ENCODE measurements at regions of chr20 and their contacts with region 1.

Region 1: GRCh38 chr20:57398231-57398821 is 7.1 kb downstream of the RBM38 start:
- DNase-seq: peak; percentile 78
- H3K4me3 Mint-ChIP-seq: peak overlapping the region; percentile 75
- H3K27ac Mint-ChIP-seq: peak overlapping the region; percentile 91
- H3K4me1 Mint-ChIP-seq: peaks cover 60% of the 10 kb centered on the region
- H3K27me3 Mint-ChIP-seq: no peaks in the 10 kb centered on the region

Region 2: GRCh38 chr20:57323034-57323433 is 75.3 kb before region 1 on chr20:
- intact Hi-C with region 1: no loop called
- DNase-seq: no peak
- H3K4me3 Mint-ChIP-seq: no peak overlapping the region
- H3K27ac Mint-ChIP-seq: no peak overlapping the region
- H3K4me1 Mint-ChIP-seq: no peaks in the 10 kb centered on the region
- H3K27me3 Mint-ChIP-seq: peaks cover 49% of the 10 kb centered on the region

Region 3: DNA sequence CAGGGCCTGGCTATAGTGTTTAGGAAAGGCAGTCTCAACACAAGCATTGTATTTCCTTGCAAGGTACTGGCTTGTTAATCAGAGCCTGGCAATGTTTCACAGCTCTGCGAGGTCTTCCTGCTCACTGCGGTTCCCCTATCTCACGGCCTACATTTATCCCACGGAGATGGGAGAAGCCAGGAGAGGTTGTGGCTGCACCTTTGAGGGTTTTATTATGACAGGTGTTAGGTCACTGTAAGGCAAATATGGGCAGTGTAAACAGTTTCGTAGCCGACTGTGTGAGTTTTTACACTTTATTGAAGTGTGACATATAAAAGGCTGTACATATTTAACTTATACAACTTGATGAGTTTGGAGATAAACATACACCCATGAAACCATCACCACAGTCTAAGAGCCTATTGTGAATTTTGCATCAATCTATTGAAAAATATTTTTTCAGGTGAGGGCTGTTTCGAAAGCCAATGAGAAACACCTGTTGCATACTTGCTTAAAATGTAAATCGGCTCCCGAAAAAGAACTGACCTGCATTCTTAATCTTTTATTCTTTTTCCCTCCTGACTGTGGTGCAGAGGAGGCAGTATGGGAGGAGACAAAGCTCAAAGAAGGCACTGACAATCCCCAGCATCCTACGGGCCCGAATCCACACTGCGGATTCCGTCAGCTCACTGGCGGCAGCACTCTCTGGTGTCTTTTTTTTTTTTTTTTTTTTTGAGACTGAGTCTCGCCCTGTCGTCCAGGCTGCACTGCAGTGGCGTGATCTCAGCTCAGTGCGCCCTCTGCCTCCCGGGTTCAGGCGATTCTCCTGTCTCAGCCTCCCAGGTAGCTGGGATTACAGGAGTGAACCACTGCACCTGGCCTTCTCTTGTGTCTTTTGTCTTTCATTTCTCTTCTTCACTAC is 14.6 kb before region 1 on chr20:
- intact Hi-C with region 1: loop called (anchors 1 kb)
- DNase-seq: no peak
- H3K4me3 Mint-ChIP-seq: no peak overlapping the region
- H3K27ac Mint-ChIP-seq: no peak overlapping the region
- H3K4me1 Mint-ChIP-seq: peaks cover 35% of the 10 kb centered on the region
- H3K27me3 Mint-ChIP-seq: no peaks in the 10 kb centered on the region

Region 4: GRCh38 chr20:57432874-57433491 is 34.7 kb after region 1 on chr20:
- intact Hi-C with region 1: loop called (anchors 2 kb)
- DNase-seq: peak; percentile 76
- H3K4me3 Mint-ChIP-seq: peak overlapping the region; percentile 34
- H3K27ac Mint-ChIP-seq: peak overlapping the region; percentile 75
- H3K4me1 Mint-ChIP-seq: peaks cover 48% of the 10 kb centered on the region
- H3K27me3 Mint-ChIP-seq: peaks cover 2% of the 10 kb centered on the region

Region 5: GRCh38 chr20:57522380-57522993 is 124.2 kb after region 1 on chr20:
- intact Hi-C with region 1: no loop called
- DNase-seq: no peak
- H3K4me3 Mint-ChIP-seq: no peak overlapping the region
- H3K27ac Mint-ChIP-seq: no peak overlapping the region
- H3K4me1 Mint-ChIP-seq: peaks cover 9% of the 10 kb centered on the region
- H3K27me3 Mint-ChIP-seq: no peaks in the 10 kb centered on the region

Region 6: GRCh38 chr20:57709931-57710799 is 311.8 kb after region 1 on chr20 and contains the start of gene PMEPA1:
- intact Hi-C with region 1: loop called (anchors 5 kb)
- DNase-seq: peak; percentile 80
- H3K4me3 Mint-ChIP-seq: peak within 1 kb of the TSS; percentile 84
- H3K27ac Mint-ChIP-seq: peak within 1 kb of the TSS; percentile 57
- H3K4me1 Mint-ChIP-seq: peaks cover 14% of the 10 kb centered on the region
- H3K27me3 Mint-ChIP-seq: peaks cover 53% of the 10 kb centered on the region
- total RNA-seq, gene PMEPA1: 0.99 and 1.1 TPM in 2 replicates

Region 7: DNA sequence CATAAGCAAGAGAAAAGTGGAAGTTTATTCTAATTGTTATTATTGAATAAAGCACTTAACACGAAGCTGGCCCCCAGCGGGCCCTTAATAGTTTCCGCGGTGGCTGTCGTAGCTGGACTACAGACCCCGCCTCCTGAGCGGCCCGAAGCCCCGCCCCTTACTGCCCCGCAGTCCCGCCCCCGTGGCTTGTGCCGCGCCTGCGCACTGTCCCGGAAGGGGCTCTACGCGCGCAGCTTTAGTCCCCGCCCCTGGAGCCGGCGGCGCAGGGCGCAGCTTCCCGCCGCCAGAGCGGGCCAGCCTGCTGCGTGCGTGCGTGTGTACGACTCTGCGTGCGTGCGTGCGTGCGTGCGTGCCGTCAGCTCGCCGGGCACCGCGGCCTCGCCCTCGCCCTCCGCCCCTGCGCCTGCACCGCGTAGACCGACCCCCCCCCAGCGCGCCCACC is 990.6 kb after region 1 on chr20 and contains the start of gene VAPB:
- intact Hi-C with region 1: loop called (anchors 5 kb)
- DNase-seq: peak; percentile 95
- H3K4me3 Mint-ChIP-seq: peak within 1 kb of the TSS; percentile 96
- H3K27ac Mint-ChIP-seq: peak within 1 kb of the TSS; percentile 97
- H3K4me1 Mint-ChIP-seq: peaks cover 35% of the 10 kb centered on the region
- H3K27me3 Mint-ChIP-seq: peaks cover 5% of the 10 kb centered on the region
- total RNA-seq, gene VAPB: 35.6 and 36.2 TPM in 2 replicates

Measured in activated T-helper 2 cell treated with anti-CD3 and anti-CD28 coated beads, Interferon-gamma antibody, Interleukin-2, Interleukin-4, amounts not matched to agents 10 μg/mL and 5 μg/mL and 100 μg/mL, durations not matched to agents 14 hours and 24 hours and 36 hours (primary cell).